ENCODE measurements at regions of chr7 and their contacts with region 1.

Region 1: DNA sequence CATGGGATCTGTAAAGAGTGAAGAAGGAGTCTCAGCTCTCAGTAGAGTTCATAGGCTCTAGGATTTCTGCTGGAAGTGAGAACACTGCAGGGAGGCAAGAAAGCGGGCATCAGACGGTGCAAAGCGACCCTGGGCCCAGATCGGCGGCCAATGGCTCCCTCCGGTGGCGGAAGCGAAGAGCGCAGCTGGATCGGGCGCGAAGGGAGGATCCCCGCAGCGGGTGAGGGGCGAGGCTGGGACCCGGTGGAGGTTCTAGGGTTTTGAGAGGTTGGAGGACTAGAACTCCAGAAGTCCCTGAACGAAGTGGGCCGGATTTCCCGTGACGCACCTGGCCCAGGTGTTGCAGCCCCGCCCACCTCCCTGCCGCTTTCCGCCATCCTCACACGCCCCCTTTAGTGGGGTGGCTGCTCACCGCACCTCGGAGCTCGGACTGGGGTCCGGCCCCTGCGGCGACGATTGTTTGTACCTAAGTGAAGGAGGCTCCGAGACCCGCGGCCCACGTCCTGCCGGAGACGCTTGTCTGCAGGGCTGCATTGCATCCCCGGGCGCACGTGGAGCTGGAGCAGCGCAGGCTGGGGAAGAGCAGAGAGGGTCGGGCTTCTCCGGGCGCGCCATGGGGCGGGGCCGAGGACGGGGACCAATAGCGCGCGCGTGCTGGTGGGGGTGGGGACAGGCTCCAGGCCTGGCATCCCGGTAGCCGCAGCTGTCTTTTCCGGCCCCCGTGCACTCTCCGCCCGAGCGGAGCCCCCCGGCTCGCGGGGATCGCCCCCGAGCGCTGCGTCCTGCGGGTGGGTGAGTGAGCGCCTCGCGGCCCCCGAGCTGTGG is at the start of gene SLC12A9:
- DNase-seq: peak; percentile 96 to 97
- ATAC-seq: peak; percentile 99
- H3K4me3 ChIP-seq: peak within 1 kb of the TSS; percentile 34 to 65
- H3K27ac ChIP-seq: peak within 1 kb of the TSS in 1 of 2 donors; percentile 9
- H3K4me1 ChIP-seq: no peaks in the 10 kb centered on the region
- H3K27me3 ChIP-seq: no peaks in the 10 kb centered on the region
- total RNA-seq, gene SLC12A9: 20.3 to 34.3 TPM

Region 2: DNA sequence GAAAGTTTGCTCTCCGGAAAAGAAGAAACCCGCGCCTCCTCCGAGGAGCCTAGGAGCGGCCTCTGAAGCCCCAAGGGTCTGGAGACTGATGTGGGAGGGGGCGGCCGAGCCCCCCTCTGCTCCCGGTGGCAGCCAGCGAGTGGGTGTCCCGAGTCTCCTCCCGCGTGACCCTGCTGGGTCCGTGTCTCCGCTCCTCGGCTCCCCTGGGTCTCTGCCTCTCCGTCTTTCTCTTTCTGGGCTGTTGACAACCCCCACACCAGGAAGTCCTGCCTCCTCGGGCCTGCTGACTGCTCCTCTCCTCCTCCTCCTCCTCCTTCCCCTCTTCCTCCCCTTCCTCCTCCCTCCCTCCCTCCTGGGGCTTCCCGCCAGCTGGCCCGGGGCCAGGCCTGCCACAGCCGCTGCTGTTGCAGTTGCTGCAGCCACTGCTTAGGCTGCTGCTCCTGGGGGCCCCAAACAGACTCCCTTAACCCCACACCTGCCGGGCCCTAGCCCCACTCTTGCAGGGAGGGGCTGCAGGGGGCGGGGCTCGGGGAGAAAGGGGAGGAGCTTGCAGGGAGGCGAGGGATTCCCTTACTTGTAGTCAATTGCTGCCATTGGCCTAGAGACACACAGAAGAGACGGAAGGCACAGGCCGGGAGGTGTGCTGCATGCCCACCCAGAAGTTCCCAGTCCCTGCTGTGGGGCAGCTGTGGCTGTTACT is 373.1 kb before region 1 on chr7 and contains the start of gene TSC22D4:
- intact Hi-C with region 1: loop called in 1 of 2 experiments (anchors 10 kb)
- DNase-seq: peak; percentile 97 to 98
- ATAC-seq: peak; percentile 93
- H3K4me3 ChIP-seq: peak within 1 kb of the TSS; percentile 85 to 91
- H3K27ac ChIP-seq: peak within 1 kb of the TSS in 1 of 2 donors; percentile 58
- H3K4me1 ChIP-seq: no peaks in the 10 kb centered on the region
- H3K27me3 ChIP-seq: no peaks in the 10 kb centered on the region
- total RNA-seq, gene TSC22D4: 31.2 to 46.5 TPM

Region 3: DNA sequence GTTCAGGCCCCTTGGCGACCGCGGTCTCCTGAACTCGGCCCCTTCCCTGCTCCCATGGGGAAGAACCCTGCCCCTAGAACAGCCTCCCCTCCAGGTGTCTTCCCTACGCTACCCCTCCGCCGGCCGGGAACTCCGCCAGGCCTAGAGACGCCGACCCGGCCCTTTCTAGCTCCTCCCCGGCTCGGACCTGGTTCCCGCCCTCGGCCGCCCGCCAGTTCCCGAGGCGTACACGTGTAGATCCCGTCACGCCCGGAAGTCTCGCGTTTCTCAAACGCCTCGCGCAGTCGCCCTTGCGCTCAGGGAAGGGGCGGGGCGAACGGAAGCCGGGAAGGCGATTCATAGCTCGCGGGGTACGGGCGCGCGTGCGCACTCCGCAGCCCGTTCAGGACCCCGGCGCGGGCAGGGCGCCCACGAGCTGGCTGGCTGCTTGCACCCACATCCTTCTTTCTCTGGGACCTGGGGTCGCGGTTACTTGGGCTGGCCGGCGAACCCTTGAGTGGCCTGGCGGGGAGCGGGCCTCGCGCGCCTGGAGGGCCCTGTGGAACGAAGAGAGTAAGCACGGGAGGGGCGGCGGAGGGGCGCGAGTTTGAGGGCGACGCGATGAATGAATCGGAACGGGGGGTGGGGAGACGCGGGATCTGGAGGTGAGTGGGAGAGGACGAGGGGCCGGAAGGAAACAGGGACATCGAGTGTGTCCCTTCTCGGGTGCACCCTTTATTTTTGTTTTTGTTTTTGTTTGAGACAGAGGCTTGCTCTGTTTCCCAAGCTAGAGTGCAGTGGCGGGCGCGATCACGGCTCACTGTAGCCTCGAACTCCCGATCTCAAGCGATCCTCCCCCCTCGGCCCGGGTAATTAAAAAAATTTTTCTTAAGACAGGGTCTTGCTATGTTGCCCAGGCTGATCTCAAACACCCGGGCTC is 146.2 kb before region 1 on chr7 and contains the start of gene POP7:
- intact Hi-C with region 1: loop called (anchors 1 to 2 kb)
- DNase-seq: peak; percentile 99 to 100
- ATAC-seq: peak; percentile 99
- H3K4me3 ChIP-seq: peak within 1 kb of the TSS; percentile 36 to 59
- H3K27ac ChIP-seq: peak within 1 kb of the TSS in 1 of 2 donors; percentile 75
- H3K4me1 ChIP-seq: no peaks in the 10 kb centered on the region
- H3K27me3 ChIP-seq: no peaks in the 10 kb centered on the region
- total RNA-seq, gene POP7: 16.4 to 17.9 TPM

Region 4: GRCh38 chr7:100799014-100799896 is 53.0 kb before region 1 on chr7:
- intact Hi-C with region 1: loop called in 1 of 2 experiments (anchors 2 kb)
- DNase-seq: peak; percentile 67 to 84
- ATAC-seq: peak; percentile 48
- H3K4me3 ChIP-seq: no peak overlapping the region
- H3K27ac ChIP-seq: no peak overlapping the region
- H3K4me1 ChIP-seq: no peaks in the 10 kb centered on the region
- H3K27me3 ChIP-seq: no peaks in the 10 kb centered on the region

Measured in aorta (tissue), 5 donors.